H1 (cell line): ENCODE measurements at regions of chr3 and their contacts with region 1.

Region 1: GRCh38 chr3:73868688-73869315 is 244.1 kb upstream of the PDZRN3 start:
- DNase-seq: peak in 1 of 2 experiments; percentile 53
- H3K4me3 ChIP-seq: no peak overlapping the region
- H3K27ac ChIP-seq: no peak overlapping the region
- H3K4me1 ChIP-seq: no peaks in the 10 kb centered on the region
- H3K27me3 ChIP-seq: no peaks in the 10 kb centered on the region
- CTCF ChIP-seq: peak in 2 of 3 experiments; percentile 49 to 52; a peak in 2 of 4 replicates
- EP300 ChIP-seq: no peak
- POLR2A ChIP-seq: no peak
- RAD21 ChIP-seq: peak; percentile 86 to 93

Region 2: DNA sequence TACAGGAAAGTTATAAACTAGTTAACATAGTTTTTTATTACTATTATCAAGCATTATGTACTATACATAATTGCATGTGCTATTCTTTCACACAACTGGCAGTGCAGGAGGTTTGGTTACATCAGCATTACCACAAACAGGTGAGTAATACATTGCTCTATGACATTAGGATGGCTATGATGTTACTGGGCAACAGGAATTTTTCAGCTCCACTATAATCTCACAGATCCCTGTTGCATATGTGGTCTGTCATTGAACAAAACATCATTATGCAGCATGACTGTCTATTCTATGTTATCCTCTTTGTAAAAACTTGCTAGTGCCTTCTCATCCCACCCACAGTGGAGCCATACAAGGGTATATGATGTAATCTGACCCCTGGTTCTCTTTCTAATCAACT is 207.5 kb before region 1 on chr3:
- CTCF ChIA-PET with region 1: no interaction called
- POLR2A ChIA-PET with region 1: no interaction called
- DNase-seq: no peak
- H3K4me3 ChIP-seq: no peak overlapping the region
- H3K27ac ChIP-seq: no peak overlapping the region
- H3K4me1 ChIP-seq: peaks cover 0 to 7% (median 4%) of the 10 kb centered on the region in 4 experiments; a peak in 3 of 7 replicates
- H3K27me3 ChIP-seq: no peaks in the 10 kb centered on the region; a peak in 3 of 7 replicates
- CTCF ChIP-seq: no peak
- EP300 ChIP-seq: no peak
- POLR2A ChIP-seq: no peak
- RAD21 ChIP-seq: no peak

Region 3: GRCh38 chr3:73855813-73856514 is 12.8 kb before region 1 on chr3:
- CTCF ChIA-PET with region 1: interaction called, 10 read pairs
- POLR2A ChIA-PET with region 1: no interaction called
- DNase-seq: no peak
- H3K4me3 ChIP-seq: no peak overlapping the region
- H3K27ac ChIP-seq: no peak overlapping the region
- H3K4me1 ChIP-seq: peaks cover 0 to 2% (median 0%) of the 10 kb centered on the region in 4 experiments; a peak in 1 of 7 replicates
- H3K27me3 ChIP-seq: no peaks in the 10 kb centered on the region
- CTCF ChIP-seq: no peak
- EP300 ChIP-seq: no peak
- POLR2A ChIP-seq: no peak
- RAD21 ChIP-seq: no peak

Region 4: GRCh38 chr3:73894474-73895213 is 25.8 kb after region 1 on chr3:
- CTCF ChIA-PET with region 1: no interaction called
- POLR2A ChIA-PET with region 1: no interaction called
- DNase-seq: no peak
- H3K4me3 ChIP-seq: no peak overlapping the region
- H3K27ac ChIP-seq: no peak overlapping the region
- H3K4me1 ChIP-seq: peaks cover 0 to 3% (median 0%) of the 10 kb centered on the region in 4 experiments; a peak in 1 of 7 replicates
- H3K27me3 ChIP-seq: no peaks in the 10 kb centered on the region
- CTCF ChIP-seq: no peak
- EP300 ChIP-seq: no peak
- POLR2A ChIP-seq: no peak
- RAD21 ChIP-seq: no peak